HEK293 (cell line): ENCODE measurements at regions of chr20 and their contacts with region 1.

Region 1: GRCh38 chr20:34312544-34313217 is 9.5 kb upstream of the AHCY start:
- H3K4me3 ChIP-seq: peak overlapping the region; percentile 34
- H3K27ac ChIP-seq: no peak overlapping the region
- H3K4me1 ChIP-seq: no peaks in the 10 kb centered on the region
- CTCF ChIP-seq: peak; percentile 100

Region 2: DNA sequence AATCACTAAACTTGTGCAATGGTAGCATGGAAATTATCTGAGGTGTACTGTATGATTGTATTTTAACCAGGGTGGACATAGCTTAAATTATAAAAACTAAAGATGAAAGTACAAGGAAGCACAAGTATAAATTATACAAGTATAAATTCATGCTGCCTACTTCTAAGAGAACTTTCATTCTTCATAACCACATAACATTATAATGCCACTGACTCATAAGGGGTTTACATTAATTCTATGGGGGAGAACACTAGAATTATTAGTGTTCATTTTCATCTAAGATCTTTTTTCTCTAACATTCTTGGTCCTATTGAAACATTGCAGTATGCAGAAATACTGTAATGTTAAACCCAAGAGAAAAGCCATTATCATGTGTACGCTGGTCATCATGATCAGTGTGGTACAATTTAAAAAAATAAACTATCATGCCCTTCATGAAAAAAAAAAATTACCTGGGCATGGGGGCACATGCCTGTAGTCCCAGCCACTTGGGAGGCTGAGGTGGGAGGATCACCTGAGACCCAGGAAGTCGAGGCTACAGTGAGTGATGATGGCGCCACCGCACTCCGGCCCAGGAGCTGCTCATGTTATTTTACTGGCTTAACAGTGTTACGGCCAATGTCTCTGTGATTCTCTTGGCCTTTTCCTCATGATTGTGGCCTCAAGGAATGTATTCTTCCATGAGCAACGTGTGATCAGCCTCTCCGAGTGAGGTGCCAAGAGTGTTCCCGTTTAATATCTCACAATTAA is 16.4 kb after region 1 on chr20:
- CTCF ChIA-PET with region 1: interaction called, 23 read pairs
- POLR2A ChIA-PET with region 1: no interaction called
- H3K4me3 ChIP-seq: no peak overlapping the region
- H3K27ac ChIP-seq: no peak overlapping the region
- H3K4me1 ChIP-seq: no peaks in the 10 kb centered on the region
- CTCF ChIP-seq: no peak

Region 3: GRCh38 chr20:34403908-34404307 is 91.2 kb after region 1 on chr20:
- CTCF ChIA-PET with region 1: interaction called, 21 read pairs
- POLR2A ChIA-PET with region 1: no interaction called
- H3K4me3 ChIP-seq: no peak overlapping the region
- H3K27ac ChIP-seq: no peak overlapping the region
- H3K4me1 ChIP-seq: peaks cover 3% of the 10 kb centered on the region; the same call in 1 of the 2 replicates
- CTCF ChIP-seq: no peak

Region 4: DNA sequence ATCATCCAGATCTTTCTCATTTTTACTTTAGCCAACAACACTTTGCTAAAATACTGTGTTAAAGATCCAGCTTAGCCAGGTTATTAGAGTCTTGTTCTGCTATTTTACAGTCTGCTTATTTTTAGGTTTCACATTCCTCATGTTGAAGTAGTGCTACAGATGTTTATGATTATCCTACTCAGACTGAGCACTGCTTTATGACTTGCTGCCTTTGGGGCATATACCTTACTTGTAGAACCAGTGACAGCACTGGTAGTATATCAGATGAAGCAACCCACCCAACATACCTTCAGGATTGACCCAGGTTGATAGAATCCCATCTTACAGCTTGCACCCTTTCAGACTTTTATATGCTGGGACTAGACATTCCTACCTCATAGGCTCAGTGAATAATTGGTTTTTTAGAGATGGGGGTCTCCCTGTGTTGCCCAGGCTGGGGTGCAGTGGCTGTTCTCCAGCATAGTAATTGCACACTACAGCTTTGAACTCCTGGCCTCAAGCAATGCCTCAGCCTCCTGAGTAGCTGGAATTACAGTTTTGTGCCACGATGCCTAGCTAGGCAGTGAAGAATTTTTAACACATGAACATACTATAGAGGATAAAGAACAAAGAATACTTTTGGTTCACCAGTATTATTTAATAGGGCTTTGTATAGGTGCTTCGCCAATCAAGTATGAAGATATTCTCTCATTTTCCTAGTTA is 139.8 kb after region 1 on chr20:
- CTCF ChIA-PET with region 1: interaction called, 13 read pairs
- POLR2A ChIA-PET with region 1: no interaction called
- H3K4me3 ChIP-seq: no peak overlapping the region
- H3K27ac ChIP-seq: no peak overlapping the region
- H3K4me1 ChIP-seq: no peaks in the 10 kb centered on the region
- CTCF ChIP-seq: no peak

Region 5: DNA sequence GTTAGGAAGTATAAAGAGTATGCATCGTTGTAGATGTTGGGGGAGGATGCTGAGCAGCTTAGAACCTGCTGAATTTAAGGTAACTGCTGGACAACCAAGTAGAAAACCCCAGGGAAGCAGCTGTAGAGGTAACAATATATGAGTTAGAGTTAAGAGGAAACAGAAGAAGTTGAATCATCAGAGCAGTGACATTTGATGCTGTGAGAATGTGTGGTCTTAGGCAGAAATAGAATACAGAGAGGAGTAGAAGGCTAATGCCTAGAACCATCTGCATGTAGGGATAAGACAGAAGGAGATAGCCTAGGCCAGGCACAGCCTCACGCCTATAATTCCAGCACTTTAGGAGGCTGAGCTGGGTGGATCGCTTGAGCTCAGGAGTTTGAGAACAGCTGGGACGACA is 181.0 kb after region 1 on chr20:
- CTCF ChIA-PET with region 1: interaction called, 20 read pairs
- POLR2A ChIA-PET with region 1: no interaction called
- H3K4me3 ChIP-seq: no peak overlapping the region
- H3K27ac ChIP-seq: no peak overlapping the region
- H3K4me1 ChIP-seq: no peaks in the 10 kb centered on the region
- CTCF ChIP-seq: no peak

Region 6: DNA sequence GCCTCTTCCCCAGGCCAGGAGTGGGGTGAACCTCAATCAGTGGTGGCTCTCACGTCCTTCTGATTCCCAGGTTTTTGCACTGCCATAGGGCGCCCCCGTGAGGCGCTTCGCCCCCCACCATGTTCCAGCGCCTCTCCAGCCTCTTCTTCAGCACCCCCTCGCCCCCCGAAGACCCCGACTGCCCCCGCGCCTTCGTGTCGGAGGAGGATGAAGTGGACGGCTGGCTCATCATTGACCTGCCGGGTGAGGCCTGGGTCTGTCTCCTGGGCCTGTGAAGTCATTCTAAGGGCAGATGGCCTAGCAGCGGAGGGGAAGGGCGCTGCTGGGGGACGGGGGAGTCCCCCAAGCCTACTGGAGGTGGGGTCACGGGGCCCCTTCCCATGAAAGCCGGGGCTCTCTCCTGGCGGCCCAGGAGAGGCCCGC is 396.0 kb after region 1 on chr20:
- CTCF ChIA-PET with region 1: interaction called, 12 read pairs
- POLR2A ChIA-PET with region 1: no interaction called
- H3K4me3 ChIP-seq: peak overlapping the region; percentile 59
- H3K27ac ChIP-seq: peak overlapping the region; percentile 86; the same call in 1 of the 2 replicates
- H3K4me1 ChIP-seq: peaks cover 12% of the 10 kb centered on the region
- CTCF ChIP-seq: peak; percentile 55